AG04450 (cell line): ENCODE measurements at regions of chr4 and their contacts with region 1.

Region 1: DNA sequence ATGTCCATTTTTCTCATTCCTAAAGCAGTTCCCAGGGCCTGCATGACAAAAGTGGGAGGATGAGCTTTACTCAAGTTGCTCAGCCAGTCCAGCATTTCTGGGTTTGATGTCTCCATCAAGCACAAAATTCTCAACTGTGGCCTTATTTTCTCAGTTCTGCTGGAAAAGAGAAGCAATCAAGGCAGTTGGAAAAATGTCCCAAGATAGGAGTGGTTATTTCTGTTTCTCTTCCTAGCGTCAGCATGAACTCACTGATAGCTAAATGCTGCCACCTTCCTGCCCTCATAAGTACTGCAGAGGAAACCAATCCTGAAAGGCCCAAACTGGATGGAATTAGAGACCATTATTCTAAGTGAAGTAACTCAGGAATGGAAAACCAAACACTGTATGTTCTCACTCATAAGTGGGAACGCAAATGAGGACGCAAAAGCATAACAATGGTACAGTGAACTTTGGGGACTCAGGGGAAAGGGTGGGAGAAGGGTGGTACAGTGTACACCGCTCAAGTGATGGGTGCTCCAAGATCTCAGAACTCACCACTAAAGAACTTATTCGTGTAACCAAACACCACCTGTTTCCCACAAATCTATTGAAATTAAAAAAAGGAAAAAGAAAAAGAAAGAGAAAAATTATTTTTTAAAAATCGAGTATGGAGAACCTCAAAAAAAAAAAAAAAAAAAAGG is 29.6 kb downstream of the ADH7 start:
- DNase-seq: peak; percentile 70
- H3K4me3 ChIP-seq: no peak overlapping the region
- H3K27ac ChIP-seq: no peak overlapping the region
- H3K27me3 ChIP-seq: peaks cover 2% of the 10 kb centered on the region
- CTCF ChIP-seq: peak; percentile 97

Region 2: GRCh38 chr4:99024481-99025275 is 380.9 kb before region 1 on chr4:
- CTCF ChIA-PET with region 1: no interaction called
- POLR2A ChIA-PET with region 1: no interaction called
- DNase-seq: no peak
- H3K4me3 ChIP-seq: no peak overlapping the region
- H3K27ac ChIP-seq: no peak overlapping the region
- H3K27me3 ChIP-seq: no peaks in the 10 kb centered on the region
- CTCF ChIP-seq: no peak

Region 3: GRCh38 chr4:99117876-99118693 is 287.5 kb before region 1 on chr4:
- CTCF ChIA-PET with region 1: interaction called, 28 read pairs
- POLR2A ChIA-PET with region 1: no interaction called
- DNase-seq: no peak
- H3K4me3 ChIP-seq: no peak overlapping the region
- H3K27ac ChIP-seq: no peak overlapping the region
- H3K27me3 ChIP-seq: no peaks in the 10 kb centered on the region
- CTCF ChIP-seq: peak; percentile 45; the same call in 1 of the 2 replicates

Region 4: GRCh38 chr4:99149426-99150019 is 256.1 kb before region 1 on chr4:
- CTCF ChIA-PET with region 1: interaction called, 10 read pairs
- POLR2A ChIA-PET with region 1: no interaction called
- DNase-seq: no peak
- H3K4me3 ChIP-seq: no peak overlapping the region
- H3K27ac ChIP-seq: no peak overlapping the region
- H3K27me3 ChIP-seq: no peaks in the 10 kb centered on the region
- CTCF ChIP-seq: no peak

Region 5: GRCh38 chr4:99201690-99202089 is 203.9 kb before region 1 on chr4:
- CTCF ChIA-PET with region 1: interaction called, 122 read pairs
- POLR2A ChIA-PET with region 1: no interaction called
- DNase-seq: no peak
- H3K4me3 ChIP-seq: no peak overlapping the region
- H3K27ac ChIP-seq: no peak overlapping the region
- H3K27me3 ChIP-seq: no peaks in the 10 kb centered on the region
- CTCF ChIP-seq: peak; percentile 45

Region 6: GRCh38 chr4:99382745-99383360 is 22.7 kb before region 1 on chr4:
- CTCF ChIA-PET with region 1: interaction called, 12 read pairs
- POLR2A ChIA-PET with region 1: interaction called, 4 read pairs
- DNase-seq: no peak
- H3K4me3 ChIP-seq: no peak overlapping the region
- H3K27ac ChIP-seq: peak overlapping the region; percentile 92
- H3K27me3 ChIP-seq: no peaks in the 10 kb centered on the region
- CTCF ChIP-seq: no peak

Region 7: DNA sequence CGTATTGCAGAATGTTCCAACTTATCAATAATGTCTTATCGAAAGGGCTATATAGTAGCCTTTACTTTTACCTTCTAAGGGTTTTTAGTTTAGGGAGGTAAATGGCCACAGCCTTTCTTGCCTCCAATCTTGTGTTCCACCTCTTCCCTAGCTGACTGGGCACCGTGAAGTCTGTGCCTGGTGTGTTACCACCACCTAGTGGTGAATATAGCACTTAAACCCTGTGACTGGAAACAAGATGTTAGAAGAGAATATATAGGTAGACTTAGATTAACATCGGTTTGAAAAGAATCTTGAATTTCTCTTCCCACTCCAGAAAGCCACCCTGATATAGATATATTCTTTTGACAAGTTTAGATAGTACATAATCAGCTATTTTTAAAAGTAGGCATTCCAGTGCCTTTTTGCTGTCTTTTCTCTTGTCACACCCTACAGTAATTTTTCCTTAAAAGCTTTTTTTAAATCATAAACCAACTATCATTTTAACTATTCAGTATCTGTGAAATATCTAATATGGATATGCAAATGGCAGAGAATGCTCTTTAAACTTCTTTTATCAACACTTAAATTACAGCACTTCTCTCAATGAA is 57.4 kb after region 1 on chr4:
- CTCF ChIA-PET with region 1: interaction called, 15 read pairs
- POLR2A ChIA-PET with region 1: no interaction called
- DNase-seq: peak; percentile 39
- H3K4me3 ChIP-seq: no peak overlapping the region
- H3K27ac ChIP-seq: no peak overlapping the region
- H3K27me3 ChIP-seq: peaks cover 2% of the 10 kb centered on the region
- CTCF ChIP-seq: peak; percentile 88